Psoas muscle (tissue), 8 donors: ENCODE measurements at regions of chr17 and their contacts with region 1.

Region 1: GRCh38 chr17:80832888-80833583 is 158.6 kb upstream of the CHMP6 start:
- DNase-seq: peak; percentile 92
- ATAC-seq: peak; percentile 92 to 93 (median 92)
- H3K4me3 ChIP-seq: peak overlapping the region; percentile 62
- H3K27ac ChIP-seq: peak overlapping the region; percentile 93
- H3K4me1 ChIP-seq: peaks cover 39% of the 10 kb centered on the region
- H3K27me3 ChIP-seq: no peaks in the 10 kb centered on the region
- CTCF ChIP-seq: no peak

Region 2: DNA sequence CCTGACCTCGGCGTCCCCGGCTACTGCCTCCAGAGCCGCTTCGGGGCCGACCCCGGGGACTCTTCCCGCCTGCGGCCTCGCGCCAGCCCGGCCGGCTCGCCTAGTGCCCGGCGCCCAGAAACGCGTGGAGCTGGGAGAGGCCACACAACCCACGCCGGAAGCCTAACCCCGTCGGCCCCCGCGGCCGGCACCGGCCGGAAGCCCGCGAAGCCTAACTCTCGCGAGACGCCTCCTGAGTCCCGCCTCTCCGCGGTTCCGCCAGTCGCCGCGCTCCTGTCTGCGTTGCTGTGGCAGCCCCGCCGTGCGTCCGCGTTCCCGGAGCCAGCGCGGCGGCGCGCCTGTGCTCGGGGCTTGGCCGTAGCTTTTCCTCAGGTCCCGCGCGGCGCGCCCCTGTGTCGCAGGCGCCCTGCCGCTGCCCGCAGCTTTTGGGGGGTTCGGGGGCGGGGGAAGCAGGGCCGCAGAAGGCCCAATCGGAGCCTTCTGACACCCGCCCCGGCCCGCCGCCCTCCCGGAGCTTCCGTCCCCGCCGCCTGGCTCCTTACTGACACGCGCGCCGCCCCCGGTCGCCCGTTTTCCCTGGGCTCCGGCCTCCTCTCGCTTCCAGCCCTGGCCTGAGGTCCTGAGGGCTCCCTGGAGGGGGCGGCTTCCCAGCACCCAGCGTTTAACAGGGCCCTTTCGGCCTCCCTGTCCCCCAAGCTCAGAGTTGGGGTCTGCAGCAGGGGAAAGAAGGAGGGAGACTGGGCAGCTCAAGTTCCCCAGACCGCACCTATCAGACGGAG is 378.3 kb before region 1 on chr17:
- intact Hi-C with region 1: loop called in 1 of 2 experiments (anchors 2 kb)
- DNase-seq: peak; percentile 97 to 99
- ATAC-seq: peak; percentile 88 to 90 (median 89)
- H3K4me3 ChIP-seq: peak overlapping the region; percentile 79
- H3K27ac ChIP-seq: peak overlapping the region; percentile 98
- H3K4me1 ChIP-seq: peaks cover 30% of the 10 kb centered on the region
- H3K27me3 ChIP-seq: no peaks in the 10 kb centered on the region
- CTCF ChIP-seq: no peak

Region 3: GRCh38 chr17:80899402-80900268 is 66.6 kb after region 1 on chr17:
- intact Hi-C with region 1: no loop called
- DNase-seq: no peak
- ATAC-seq: peak; percentile 57 to 80 (median 64)
- H3K4me3 ChIP-seq: no peak overlapping the region
- H3K27ac ChIP-seq: no peak overlapping the region
- H3K4me1 ChIP-seq: no peaks in the 10 kb centered on the region
- H3K27me3 ChIP-seq: no peaks in the 10 kb centered on the region
- CTCF ChIP-seq: peak; percentile 54